ENCODE measurements at regions of chr4 and their contacts with region 1.

Region 1: DNA sequence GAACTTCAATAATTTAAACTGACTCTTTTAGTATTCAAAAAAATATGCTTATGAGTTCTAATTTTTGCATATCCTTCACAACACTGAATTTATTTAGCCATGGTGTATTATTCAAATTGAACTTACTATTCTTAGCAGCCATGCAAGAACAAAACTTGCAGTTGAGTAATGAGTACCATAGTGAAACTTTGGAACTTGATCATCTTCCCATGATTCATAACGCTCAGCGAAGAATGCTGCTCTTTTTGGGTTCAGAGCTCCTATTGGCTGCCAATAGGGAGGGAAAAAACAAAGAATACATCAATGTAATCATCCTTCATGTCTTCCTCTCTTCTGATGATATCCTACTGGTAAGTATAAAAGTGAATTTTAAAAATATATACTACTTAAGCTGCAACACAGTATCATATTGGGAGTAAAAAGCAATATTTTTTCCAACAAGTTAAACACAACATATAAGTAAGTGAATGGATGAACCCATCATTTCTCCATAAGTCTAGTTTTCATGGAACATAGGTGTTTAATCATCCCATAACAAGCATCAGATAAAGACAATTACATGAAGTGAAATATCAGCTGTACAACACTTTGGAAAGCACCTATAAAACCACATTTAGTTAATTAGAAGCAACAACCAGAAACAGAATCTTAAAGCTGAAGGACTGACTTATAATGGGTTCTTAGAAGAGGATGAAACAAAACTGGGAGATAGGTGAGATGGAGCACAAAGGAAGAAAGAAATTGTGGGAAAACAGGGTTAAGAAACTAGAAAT is 145.2 kb upstream of the MAB21L2 start:
- DNase-seq: no peak
- H3K4me3 Mint-ChIP-seq: no peak overlapping the region
- H3K27ac Mint-ChIP-seq: peak overlapping the region; percentile 29
- H3K4me1 Mint-ChIP-seq: peaks cover 12% of the 10 kb centered on the region
- H3K27me3 Mint-ChIP-seq: no peaks in the 10 kb centered on the region

Region 2: DNA sequence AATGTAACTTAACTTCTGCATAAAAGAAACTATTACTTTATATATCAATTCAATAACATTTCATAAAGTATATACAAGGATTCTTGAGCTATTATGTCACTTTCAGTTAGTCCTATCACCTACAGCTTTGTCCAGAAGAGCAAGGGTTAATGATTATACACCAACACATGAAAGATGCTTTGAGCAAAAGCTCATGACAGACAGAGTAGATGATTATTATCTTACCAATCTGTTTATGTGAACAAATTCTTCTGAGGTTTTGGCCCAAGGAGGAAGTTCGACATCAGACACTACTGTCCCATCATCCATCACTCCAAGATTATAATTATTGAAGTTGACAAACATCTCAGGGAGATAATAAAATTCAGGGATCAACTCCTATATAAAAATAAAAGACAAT is 21.6 kb before region 1 on chr4:
- intact Hi-C with region 1: loop called (anchors 1 kb)
- DNase-seq: no peak
- H3K4me3 Mint-ChIP-seq: no peak overlapping the region
- H3K27ac Mint-ChIP-seq: no peak overlapping the region
- H3K4me1 Mint-ChIP-seq: peaks cover 8% of the 10 kb centered on the region
- H3K27me3 Mint-ChIP-seq: no peaks in the 10 kb centered on the region

Region 3: GRCh38 chr4:150493851-150494250 is 57.1 kb after region 1 on chr4:
- intact Hi-C with region 1: loop called (anchors 2 kb)
- DNase-seq: no peak
- H3K4me3 Mint-ChIP-seq: no peak overlapping the region
- H3K27ac Mint-ChIP-seq: no peak overlapping the region
- H3K4me1 Mint-ChIP-seq: peaks cover 8% of the 10 kb centered on the region
- H3K27me3 Mint-ChIP-seq: no peaks in the 10 kb centered on the region

Measured in activated T-helper 2 cell treated with anti-CD3 and anti-CD28 coated beads, Interferon-gamma antibody, Interleukin-2, Interleukin-4, amounts not matched to agents 10 μg/mL and 5 μg/mL and 100 μg/mL, durations not matched to agents 14 hours and 24 hours and 36 hours (primary cell).